Mammary epithelial cell (primary cell): ENCODE measurements at regions of chr6 and their contacts with region 1.

Region 1: DNA sequence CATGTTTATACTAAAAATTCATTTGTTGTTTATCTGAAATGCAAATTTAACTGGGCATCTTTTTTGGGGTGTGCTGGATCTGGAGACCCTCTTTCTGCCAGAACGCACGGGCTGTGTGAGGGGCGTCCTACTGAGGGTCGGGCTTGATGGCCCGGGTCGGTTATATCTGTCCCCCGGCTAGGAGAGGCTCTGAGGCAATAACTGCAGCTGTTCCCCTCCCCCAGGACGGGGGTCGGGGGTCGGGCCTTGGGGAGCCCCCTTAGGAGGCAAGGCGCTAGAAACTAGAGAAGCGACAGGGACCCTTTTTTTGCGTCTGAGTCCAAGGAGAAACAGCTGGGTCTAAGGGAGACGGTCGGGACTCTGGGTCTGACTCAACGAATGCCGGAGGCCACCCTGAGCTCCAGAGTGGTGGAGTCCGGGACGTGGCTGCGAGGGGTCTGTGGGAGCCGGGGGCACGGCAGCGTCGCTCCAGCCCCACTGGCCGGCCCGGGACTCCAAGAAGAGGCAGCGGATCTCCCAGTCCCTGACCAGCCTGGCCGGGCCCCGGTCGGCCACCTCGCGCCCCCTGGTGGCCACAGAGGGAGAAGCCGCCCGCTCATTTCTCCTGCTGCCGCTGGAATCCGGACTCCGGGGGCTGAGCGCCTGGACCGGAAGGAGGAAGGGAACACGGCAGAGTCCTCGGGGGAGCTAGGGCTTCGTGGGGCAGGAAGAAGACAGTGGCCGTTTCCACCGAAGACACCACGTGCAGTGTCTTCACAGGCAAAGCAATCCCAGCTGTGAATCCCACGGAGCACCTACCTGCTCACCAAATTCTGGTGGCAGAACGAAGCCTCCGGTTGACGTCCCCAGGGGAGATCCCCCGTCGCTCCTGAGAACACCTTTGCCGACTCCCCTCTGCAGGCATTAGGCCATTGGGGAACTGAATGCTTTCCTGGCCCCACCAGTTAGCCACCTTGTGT is 24.0 kb upstream of the SCML4 start:
- DNase-seq: peak; percentile 66
- H3K4me3 ChIP-seq: peak overlapping the region; percentile 11 to 48 (median 40)
- H3K27ac ChIP-seq: no peak overlapping the region
- H3K4me1 ChIP-seq: peaks cover 12% of the 10 kb centered on the region
- H3K27me3 ChIP-seq: no peaks in the 10 kb centered on the region
- CTCF ChIP-seq: peak; percentile 59 to 91

Region 2: DNA sequence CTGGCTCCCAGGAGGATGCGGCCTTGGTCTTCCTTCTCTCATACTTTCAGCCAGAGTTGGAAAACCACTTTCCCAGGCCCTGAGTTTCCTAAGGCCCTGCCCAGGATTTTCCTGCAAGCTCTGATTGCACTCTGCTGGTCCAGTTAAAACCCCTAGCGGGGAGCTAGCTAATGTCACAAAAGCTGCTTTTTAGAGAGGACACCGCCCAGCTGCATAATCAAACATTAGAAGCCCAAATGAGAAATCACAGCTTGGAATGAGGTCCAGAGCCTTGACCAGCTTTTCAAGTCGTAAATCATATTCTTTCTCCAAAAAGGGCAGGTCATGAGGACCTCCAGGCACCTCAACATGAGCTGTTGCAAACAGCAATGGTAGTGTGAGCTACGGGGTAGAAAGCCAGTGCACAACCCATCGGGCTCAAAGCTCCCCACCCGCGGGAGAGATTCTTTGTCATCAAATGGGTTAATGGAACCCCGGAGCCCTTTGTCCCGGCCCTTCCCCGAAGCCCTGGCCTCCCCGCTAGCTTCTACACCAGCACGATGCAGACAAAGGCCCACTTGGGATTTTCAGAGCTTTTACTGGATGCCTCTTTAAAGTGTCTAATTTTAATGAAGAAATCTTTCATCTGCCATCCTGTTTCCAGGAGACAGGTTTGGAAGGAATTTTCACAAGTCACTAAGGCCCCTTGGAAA is 158.0 kb before region 1 on chr6:
- CTCF ChIA-PET with region 1: no interaction called
- dilution Hi-C with region 1: no loop called
- in situ Hi-C with region 1: loop called in 1 of 2 experiments (anchors 10 kb)
- intact Hi-C with region 1: no loop called
- DNase-seq: no peak
- H3K4me3 ChIP-seq: no peak overlapping the region
- H3K27ac ChIP-seq: no peak overlapping the region
- H3K4me1 ChIP-seq: no peaks in the 10 kb centered on the region
- H3K27me3 ChIP-seq: no peaks in the 10 kb centered on the region
- CTCF ChIP-seq: no peak

Region 3: DNA sequence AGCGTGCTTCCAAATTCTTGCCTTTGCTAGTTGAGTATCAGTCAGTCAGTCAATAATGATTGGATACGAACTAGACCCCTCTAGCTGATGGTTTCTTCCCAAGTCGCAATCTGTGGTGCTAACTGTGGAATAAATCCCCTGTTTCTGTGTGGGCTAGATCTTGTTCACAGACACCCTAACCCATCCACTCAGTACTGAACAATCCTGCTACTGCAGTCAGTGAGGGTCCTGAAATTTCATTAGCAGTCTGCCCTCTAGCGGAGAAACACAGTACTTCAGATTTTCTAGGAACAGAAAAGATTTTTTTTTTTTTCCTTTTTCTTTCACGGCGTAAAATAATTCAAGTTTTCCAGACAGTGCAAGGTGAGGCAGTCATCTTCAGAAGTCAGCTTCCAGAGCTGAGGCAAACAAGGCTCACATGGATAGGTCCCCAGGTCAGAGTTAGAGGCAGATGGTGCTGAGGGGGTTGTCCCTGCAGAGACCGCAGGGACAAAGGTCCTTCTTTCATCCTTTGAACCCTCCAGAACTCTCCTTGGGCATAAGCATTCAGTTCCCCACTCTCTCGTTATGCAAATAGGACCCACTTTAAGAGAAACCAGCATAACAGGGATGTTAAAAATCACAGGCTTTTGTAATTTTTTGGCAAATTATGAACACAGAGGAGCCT is 143.6 kb before region 1 on chr6:
- CTCF ChIA-PET with region 1: no interaction called
- dilution Hi-C with region 1: no loop called
- in situ Hi-C with region 1: no loop called
- intact Hi-C with region 1: loop called (anchors 1 kb)
- DNase-seq: no peak
- H3K4me3 ChIP-seq: no peak overlapping the region
- H3K27ac ChIP-seq: no peak overlapping the region
- H3K4me1 ChIP-seq: no peaks in the 10 kb centered on the region
- H3K27me3 ChIP-seq: no peaks in the 10 kb centered on the region
- CTCF ChIP-seq: peak; percentile 74 to 75

Region 4: GRCh38 chr6:107753778-107754177 is 94.3 kb before region 1 on chr6:
- CTCF ChIA-PET with region 1: no interaction called
- dilution Hi-C with region 1: loop called (anchors 5 kb)
- in situ Hi-C with region 1: no loop called
- intact Hi-C with region 1: no loop called
- DNase-seq: no peak
- H3K4me3 ChIP-seq: no peak overlapping the region
- H3K27ac ChIP-seq: no peak overlapping the region
- H3K4me1 ChIP-seq: no peaks in the 10 kb centered on the region
- H3K27me3 ChIP-seq: no peaks in the 10 kb centered on the region
- CTCF ChIP-seq: no peak

Region 5: GRCh38 chr6:107794771-107795170 is 53.4 kb before region 1 on chr6:
- CTCF ChIA-PET with region 1: no interaction called
- dilution Hi-C with region 1: no loop called
- in situ Hi-C with region 1: loop called in 1 of 2 experiments (anchors 5 kb)
- intact Hi-C with region 1: no loop called
- DNase-seq: no peak
- H3K4me3 ChIP-seq: no peak overlapping the region
- H3K27ac ChIP-seq: no peak overlapping the region
- H3K4me1 ChIP-seq: no peaks in the 10 kb centered on the region
- H3K27me3 ChIP-seq: no peaks in the 10 kb centered on the region
- CTCF ChIP-seq: no peak

Region 6: GRCh38 chr6:107800564-107801164 is 47.5 kb before region 1 on chr6:
- CTCF ChIA-PET with region 1: no interaction called
- dilution Hi-C with region 1: no loop called
- in situ Hi-C with region 1: loop called (anchors 5 kb)
- intact Hi-C with region 1: loop called (anchors 1 kb)
- DNase-seq: peak; percentile 27
- H3K4me3 ChIP-seq: no peak overlapping the region
- H3K27ac ChIP-seq: no peak overlapping the region
- H3K4me1 ChIP-seq: peaks cover 4% of the 10 kb centered on the region
- H3K27me3 ChIP-seq: no peaks in the 10 kb centered on the region
- CTCF ChIP-seq: peak; percentile 61 to 85

Region 7: DNA sequence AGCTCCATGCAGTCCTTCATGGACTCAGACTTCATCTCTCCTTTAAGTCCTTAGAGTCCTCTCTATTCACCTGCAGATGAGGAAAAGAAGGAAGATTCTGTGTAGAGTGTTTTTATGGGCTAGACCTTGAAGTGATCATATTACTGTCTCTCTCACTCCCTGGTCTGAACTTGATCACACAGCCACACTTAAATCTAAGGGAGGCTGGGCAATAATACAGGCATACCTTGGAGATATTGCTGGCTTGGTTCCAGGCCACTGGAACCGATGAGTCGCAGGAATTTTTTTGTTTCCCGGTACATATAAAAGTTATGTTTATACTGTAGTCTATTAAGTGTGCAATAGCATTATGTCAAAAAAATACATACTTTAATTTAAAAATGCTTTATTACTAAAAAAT is 653.4 kb after region 1 on chr6:
- CTCF ChIA-PET with region 1: no interaction called
- dilution Hi-C with region 1: no loop called
- in situ Hi-C with region 1: no loop called
- intact Hi-C with region 1: no loop called
- DNase-seq: peak; percentile 70
- H3K4me3 ChIP-seq: no peak overlapping the region
- H3K27ac ChIP-seq: no peak overlapping the region
- H3K4me1 ChIP-seq: peaks cover 8% of the 10 kb centered on the region
- H3K27me3 ChIP-seq: no peaks in the 10 kb centered on the region
- CTCF ChIP-seq: no peak